ENCODE measurements at regions of chr1 and their contacts with region 1.

Region 1: DNA sequence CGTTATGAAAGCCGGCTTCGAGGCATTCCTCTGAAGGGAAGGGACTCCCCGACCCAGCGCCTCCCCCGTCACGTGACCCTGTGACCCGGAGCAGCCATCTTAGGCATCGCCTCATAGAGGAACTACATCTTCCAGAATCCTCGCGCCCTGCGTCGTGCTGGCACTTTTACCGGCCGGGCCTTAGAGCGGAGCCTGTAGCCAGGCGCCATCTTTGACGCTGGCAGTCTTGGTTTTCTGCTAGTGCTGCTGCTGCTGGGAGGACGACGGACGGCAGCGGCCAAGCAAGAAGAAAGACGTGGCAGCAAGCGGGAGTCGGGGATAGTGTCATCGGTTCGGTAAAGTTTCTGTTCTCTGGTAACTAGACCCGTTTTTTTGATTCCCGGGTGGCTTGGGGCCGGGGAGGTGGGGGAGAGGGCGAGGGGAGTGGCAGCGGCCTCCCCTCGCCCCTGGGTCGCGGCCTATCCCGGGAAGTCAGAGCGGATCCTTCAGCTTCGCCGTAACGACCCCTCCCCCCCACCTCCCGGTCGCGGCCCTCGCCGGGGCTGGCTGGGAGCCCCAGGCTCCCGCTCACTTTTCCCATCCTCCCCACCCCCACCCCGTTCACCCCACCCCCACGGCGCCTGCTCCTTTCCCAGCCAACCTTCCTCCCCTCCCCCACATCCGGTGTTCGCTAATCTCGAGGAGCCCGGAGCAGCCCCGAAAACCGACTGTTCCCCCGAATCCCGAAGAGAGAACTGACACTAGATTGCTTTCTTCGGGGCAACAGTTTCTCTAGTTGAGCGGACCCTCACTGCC is at the starts of genes ZBED6 and ZC3H11A:
- DNase-seq: peak; percentile 99
- H3K4me3 Mint-ChIP-seq: peak within 1 kb of the TSS; percentile 95
- H3K27ac Mint-ChIP-seq: peak within 1 kb of the TSS; percentile 96
- H3K4me1 Mint-ChIP-seq: peaks cover 46% of the 10 kb centered on the region
- H3K27me3 Mint-ChIP-seq: no peaks in the 10 kb centered on the region
- total RNA-seq, gene ZBED6: 18.6 to 20.4 TPM
- total RNA-seq, gene ZC3H11A: 90.2 to 91.8 TPM

Region 2: DNA sequence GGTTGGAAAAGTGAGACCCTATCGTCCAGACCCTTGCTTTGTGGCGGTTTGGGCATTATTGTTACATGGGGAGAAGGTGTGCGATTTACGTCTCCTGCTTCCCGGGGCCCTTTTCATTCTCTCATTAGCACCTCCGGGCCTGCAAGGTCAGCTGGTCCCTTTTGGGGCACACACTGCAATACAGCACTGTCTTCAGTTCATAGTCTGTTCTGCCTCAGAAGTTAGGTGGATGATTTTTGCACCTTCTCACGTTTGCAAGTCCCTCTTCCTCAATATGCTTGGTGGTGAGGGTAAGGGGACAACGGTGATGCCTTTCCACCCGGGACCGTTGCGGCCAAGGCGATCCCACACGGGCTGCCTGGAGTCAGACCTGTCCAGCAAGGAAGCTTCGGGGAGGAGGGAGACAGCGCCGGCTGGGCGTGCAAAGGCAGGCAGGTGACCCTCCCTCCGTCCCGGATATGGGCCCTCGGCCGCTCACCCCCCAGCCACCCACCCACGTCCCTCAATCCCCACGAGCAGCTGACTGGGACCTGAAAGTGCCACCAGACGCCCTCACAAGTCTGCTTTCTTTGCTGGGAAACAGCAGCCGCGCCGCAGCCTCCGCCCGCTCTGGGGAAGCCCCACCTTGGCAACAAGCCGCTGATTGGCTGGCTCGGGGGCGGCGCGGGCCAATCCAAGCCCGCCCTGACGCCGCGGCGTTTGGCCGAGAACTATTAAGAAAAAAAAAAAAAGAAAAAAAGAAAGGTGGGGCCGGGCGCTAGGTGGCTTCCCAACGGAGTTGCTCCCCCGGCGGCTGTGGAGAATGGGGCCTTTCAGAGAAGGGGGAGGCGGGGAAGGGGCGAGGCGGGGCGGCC is 468.6 kb before region 1 on chr1:
- CTCF ChIA-PET with region 1: no interaction called
- POLR2A ChIA-PET with region 1: no interaction called
- intact Hi-C with region 1: loop called (anchors 10 kb)
- DNase-seq: peak; percentile 96
- H3K4me3 Mint-ChIP-seq: peak overlapping the region; percentile 75
- H3K27ac Mint-ChIP-seq: peak overlapping the region; percentile 94
- H3K4me1 Mint-ChIP-seq: peaks cover 55% of the 10 kb centered on the region
- H3K27me3 Mint-ChIP-seq: no peaks in the 10 kb centered on the region

Region 3: GRCh38 chr1:203593723-203594122 is 201.9 kb before region 1 on chr1:
- CTCF ChIA-PET with region 1: no interaction called
- POLR2A ChIA-PET with region 1: no interaction called
- intact Hi-C with region 1: no loop called
- DNase-seq: peak; percentile 76
- H3K4me3 Mint-ChIP-seq: no peak overlapping the region
- H3K27ac Mint-ChIP-seq: peak overlapping the region; percentile 4
- H3K4me1 Mint-ChIP-seq: peaks cover 15% of the 10 kb centered on the region
- H3K27me3 Mint-ChIP-seq: no peaks in the 10 kb centered on the region

Region 4: DNA sequence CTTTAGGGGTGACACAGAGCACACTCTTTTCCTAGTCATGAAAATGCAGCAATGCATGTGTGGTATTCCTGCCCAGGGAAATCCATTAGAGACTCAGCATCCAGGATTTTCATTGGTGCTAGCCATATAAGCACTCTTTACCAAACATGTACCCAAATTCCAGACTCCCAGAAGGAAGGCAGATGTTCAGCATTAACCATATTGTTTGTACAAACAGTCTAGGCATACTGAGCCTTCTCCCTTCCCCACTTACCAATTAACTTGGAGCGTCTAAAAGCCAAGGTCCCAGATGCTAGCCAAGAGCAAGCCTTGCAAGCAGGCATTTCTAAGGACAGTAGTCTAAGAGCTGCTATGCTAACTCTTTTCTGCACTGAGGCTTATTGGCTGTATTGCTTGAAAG is 27.7 kb after region 1 on chr1:
- CTCF ChIA-PET with region 1: no interaction called
- POLR2A ChIA-PET with region 1: no interaction called
- intact Hi-C with region 1: loop called (anchors 1 kb)
- DNase-seq: no peak
- H3K4me3 Mint-ChIP-seq: no peak overlapping the region
- H3K27ac Mint-ChIP-seq: no peak overlapping the region
- H3K4me1 Mint-ChIP-seq: peaks cover 25% of the 10 kb centered on the region
- H3K27me3 Mint-ChIP-seq: no peaks in the 10 kb centered on the region

Region 5: GRCh38 chr1:203861379-203862184 is 65.9 kb after region 1 on chr1 and contains the start of gene SNRPE:
- CTCF ChIA-PET with region 1: no interaction called
- POLR2A ChIA-PET with region 1: no interaction called
- intact Hi-C with region 1: loop called (anchors 2 kb)
- DNase-seq: peak; percentile 98
- H3K4me3 Mint-ChIP-seq: peak within 1 kb of the TSS; percentile 93
- H3K27ac Mint-ChIP-seq: peak within 1 kb of the TSS; percentile 90
- H3K4me1 Mint-ChIP-seq: peaks cover 10% of the 10 kb centered on the region
- H3K27me3 Mint-ChIP-seq: no peaks in the 10 kb centered on the region
- total RNA-seq, gene SNRPE: 327 to 339 TPM

Region 6: GRCh38 chr1:203873094-203873493 is 77.5 kb after region 1 on chr1:
- CTCF ChIA-PET with region 1: no interaction called
- POLR2A ChIA-PET with region 1: no interaction called
- intact Hi-C with region 1: no loop called
- DNase-seq: no peak
- H3K4me3 Mint-ChIP-seq: no peak overlapping the region
- H3K27ac Mint-ChIP-seq: no peak overlapping the region
- H3K4me1 Mint-ChIP-seq: no peaks in the 10 kb centered on the region
- H3K27me3 Mint-ChIP-seq: no peaks in the 10 kb centered on the region

Region 7: DNA sequence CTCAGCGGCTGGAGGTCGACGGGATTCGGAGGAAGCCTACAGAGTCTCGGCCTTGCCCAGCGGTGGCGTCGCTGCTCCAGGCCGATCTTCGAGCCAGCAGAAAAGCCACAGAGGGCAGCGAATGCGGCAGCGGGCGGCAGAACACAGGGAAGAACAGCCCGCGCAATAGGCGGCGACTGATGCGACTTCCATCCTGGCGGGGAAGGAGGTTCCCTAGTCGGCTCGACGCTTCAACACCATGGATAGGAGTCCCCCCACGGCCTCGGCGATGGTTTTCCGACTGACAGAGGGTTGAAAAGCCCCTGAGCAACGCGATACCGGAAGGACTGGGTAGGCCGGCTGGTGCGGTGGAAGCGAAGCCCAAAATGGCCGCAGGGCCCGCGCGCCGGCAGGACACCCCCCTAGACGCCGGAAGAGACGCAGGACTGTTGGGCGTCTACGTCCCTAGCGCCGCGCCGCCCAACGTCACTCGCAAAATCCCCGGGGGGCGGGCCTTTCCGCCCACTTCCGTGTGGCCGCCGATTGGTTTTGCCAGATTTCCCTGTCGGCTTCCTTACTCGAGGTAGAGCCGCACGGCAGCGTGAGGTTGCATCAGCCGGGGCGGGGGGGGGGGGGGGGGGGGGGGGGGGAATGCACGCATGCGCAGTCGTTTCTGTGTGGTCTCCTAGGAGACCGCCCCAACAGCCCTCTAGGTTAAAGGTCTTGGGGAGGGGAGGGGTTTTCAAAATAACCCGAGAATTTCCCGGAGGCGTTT is 616.0 kb after region 1 on chr1 and contains the start of gene PPP1R15B:
- CTCF ChIA-PET with region 1: no interaction called
- POLR2A ChIA-PET with region 1: no interaction called
- intact Hi-C with region 1: loop called (anchors 5 kb)
- DNase-seq: peak; percentile 99
- H3K4me3 Mint-ChIP-seq: peak within 1 kb of the TSS; percentile 99
- H3K27ac Mint-ChIP-seq: peak within 1 kb of the TSS; percentile 98
- H3K4me1 Mint-ChIP-seq: peaks cover 12% of the 10 kb centered on the region
- H3K27me3 Mint-ChIP-seq: no peaks in the 10 kb centered on the region
- total RNA-seq, gene PPP1R15B: 54.9 to 57.1 TPM

Measured in activated CD4-positive, alpha-beta memory T cell treated with anti-CD3 and anti-CD28 coated beads for 36 hours (primary cell).